Common myeloid progenitor, CD34-positive (primary cell): ENCODE measurements at regions of chr14 and their contacts with region 1.

Region 1: DNA sequence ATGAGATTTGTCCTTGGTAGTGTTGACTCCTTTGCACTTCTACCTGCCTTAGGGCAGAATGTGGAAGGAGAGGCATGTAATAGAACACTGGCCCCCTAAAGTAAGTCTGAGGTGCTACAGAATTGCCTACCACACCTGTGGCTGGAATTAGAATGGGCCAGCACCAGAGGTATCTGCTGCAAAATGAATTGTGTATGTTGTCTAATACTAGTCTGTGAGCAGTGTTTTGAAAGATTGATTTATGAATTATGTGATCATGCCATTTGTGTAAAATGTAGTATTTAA is 5.7 kb upstream of the STYX start:
- DNase-seq: no peak
- H3K4me3 ChIP-seq: no peak overlapping the region
- H3K27ac ChIP-seq: no peak overlapping the region
- H3K4me1 ChIP-seq: peaks cover 0 to 2% (median under 1%) of the 10 kb centered on the region in 4 experiments
- H3K27me3 ChIP-seq: no peaks in the 10 kb centered on the region

Region 2: GRCh38 chr14:52711666-52712065 is 12.6 kb before region 1 on chr14:
- CTCF ChIA-PET with region 1: interaction called, 10 read pairs
- POLR2A ChIA-PET with region 1: no interaction called
- DNase-seq: no peak
- H3K4me3 ChIP-seq: no peak overlapping the region
- H3K27ac ChIP-seq: no peak overlapping the region
- H3K4me1 ChIP-seq: peaks cover 6 to 18% (median 9%) of the 10 kb centered on the region in 4 experiments
- H3K27me3 ChIP-seq: no peaks in the 10 kb centered on the region

Region 3: DNA sequence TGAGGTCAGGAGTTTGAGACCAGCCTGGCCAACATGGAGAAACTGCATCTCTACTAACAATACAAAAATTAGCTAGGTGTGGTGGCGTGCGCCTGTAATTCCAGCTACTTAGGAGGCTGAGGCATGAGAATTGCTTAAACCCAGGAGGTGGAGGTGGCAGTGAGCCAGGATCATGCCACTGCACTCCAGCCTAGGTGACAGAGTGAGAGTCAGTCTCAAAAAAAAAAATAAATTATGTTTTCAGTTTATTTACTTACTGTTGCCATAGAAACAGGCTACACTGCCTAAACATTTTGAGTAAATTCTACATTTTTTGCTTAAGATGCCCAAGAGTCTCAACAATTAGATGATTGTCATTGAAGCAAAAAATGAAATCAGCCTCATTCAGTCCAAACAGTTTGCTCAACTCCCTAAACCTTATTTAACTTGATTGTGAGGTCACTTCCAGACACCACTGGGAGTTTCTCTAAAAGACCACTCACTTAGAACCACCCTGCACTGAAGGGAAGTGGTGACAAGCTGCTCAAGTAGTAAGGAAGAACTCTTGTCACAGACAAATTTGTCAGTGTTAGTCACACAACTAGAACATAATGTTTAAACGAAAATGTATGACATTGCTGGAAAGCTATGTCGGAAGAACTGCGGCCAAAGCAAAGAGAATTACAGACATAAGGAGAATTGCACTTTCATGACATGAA is 76.9 kb after region 1 on chr14:
- CTCF ChIA-PET with region 1: no interaction called
- POLR2A ChIA-PET with region 1: no interaction called
- DNase-seq: peak; percentile 82 to 98 (median 97)
- H3K4me3 ChIP-seq: peak overlapping the region in 1 of 7 experiments; percentile 12
- H3K27ac ChIP-seq: peak overlapping the region; percentile 82 to 88
- H3K4me1 ChIP-seq: peaks cover 2 to 13% (median 7%) of the 10 kb centered on the region in 4 experiments
- H3K27me3 ChIP-seq: no peaks in the 10 kb centered on the region